GM10248 (cell line): ENCODE measurements at regions of chr1 and their contacts with region 1.

Region 1: DNA sequence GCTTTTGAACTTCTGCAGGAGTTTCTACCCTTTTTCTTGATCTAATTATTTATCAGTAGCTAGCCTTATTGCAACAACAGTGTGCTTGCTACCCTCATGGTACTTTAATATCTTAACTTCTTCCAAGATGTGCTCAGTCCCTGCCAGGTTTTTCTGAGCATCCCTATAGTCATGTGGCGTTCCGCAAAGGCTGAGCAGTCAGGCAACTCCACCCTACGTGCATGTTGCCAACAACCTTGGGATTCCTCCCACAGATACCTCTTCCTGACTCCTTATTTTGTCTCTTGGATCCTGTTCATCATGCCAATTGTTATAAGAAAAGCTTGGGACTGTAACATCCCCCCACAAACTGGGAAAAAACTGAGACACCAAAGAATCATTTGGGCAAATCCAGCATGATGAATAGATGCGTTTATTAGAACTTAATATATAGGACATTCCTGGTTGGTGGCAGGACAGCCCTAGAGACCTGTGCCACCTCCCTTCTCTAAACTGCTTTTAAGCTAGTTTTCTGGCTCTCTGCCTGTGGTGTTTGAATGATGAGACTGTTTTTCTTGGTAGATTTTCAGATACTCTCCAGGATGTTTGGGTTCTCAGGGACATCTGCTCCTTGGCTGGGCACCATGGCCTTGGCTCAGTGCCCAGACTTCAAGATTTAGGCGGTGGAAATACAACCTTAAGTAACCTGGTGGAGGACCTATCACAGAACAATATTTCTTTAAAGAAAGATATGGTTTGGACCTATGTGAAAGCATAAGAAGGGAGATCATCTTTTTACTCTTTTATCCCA is 27.1 kb upstream of the KCTD3 start:
- DNase-seq: no peak
- CTCF ChIP-seq: no peak

Region 2: GRCh38 chr1:215526553-215527151 is 13.3 kb before region 1 on chr1:
- CTCF ChIA-PET with region 1: interaction called, 19 read pairs
- POLR2A ChIA-PET with region 1: no interaction called
- DNase-seq: peak; percentile 28
- CTCF ChIP-seq: peak; percentile 43